ENCODE measurements at regions of chr9 and their contacts with region 1.

Region 1: DNA sequence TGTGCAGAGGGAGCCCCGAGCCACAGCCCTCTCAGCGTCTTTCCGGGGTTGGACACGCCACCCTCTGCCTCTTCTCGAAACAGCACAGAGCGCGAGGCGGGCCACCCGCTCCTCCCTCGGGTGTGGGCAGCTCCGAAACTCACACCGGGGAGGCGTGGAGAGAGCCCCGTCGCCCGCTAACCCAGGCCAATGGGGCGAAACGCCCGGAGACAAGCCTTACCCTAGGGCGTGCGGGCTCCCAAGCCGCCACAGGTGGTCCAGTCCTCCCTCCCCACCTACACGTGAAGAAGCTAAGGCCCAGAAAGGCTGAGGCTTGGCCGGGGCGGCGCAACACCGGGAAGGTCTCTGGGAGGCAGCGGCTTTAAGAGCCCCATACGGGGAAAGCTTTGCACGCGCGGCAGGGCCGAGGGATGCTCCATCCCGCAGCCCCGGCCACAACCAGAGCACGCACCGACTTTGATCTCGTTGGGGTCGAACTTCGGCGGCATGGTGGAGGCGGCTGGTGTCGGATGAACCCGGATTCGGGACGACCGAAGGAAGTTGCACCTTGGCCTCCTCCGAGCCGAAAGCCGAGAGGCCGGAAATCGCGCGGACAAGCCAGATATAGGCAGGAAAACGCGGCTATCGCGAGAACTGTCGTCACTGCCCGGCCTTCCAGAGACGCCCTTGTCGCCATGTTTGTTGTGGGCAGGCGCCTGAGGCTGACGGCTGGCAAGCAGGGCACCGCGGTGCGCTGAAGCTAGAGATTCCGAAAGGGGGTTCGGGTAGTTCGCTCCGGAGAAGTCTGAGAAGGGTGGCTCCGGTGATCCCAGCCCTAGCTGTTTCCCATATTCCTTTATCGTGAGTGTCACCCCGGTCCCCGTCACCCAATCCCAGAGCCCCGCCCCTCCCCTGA is at the starts of genes LRSAM1 and RPL12:
- DNase-seq: peak; percentile 97
- ATAC-seq: peak; percentile 85 to 88
- total RNA-seq, gene LRSAM1: 17.2 to 22.6 TPM
- total RNA-seq, gene RPL12: 691 to 730 TPM

Region 2: DNA sequence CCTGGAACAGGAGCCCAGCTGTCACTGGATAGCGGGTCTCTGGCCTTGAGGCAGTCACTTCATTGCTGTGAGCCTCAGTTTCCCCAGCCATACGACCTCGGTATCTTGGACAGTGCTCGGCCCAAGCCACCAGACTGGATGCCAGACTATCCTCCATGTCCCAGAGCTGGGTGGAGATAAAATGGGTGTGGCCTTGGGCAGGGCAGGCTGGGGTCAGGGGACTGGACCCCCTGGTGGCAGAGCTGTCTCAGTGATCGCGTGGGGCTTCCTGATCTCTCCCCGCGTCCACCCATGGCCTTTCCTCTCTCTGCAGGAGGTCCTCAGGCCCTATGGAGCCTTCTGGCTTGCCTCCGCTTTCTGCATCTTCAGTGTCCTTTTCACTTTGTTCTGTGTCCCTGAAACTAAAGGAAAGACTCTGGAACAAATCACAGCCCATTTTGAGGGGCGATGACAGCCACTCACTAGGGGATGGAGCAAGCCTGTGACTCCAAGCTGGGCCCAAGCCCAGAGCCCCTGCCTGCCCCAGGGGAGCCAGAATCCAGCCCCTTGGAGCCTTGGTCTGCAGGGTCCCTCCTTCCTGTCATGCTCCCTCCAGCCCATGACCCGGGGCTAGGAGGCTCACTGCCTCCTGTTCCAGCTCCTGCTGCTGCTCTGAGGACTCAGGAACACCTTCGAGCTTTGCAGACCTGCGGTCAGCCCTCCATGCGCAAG is 44.1 kb before region 1 on chr9:
- intact Hi-C with region 1: no loop called
- DNase-seq: no peak
- ATAC-seq: peak in 1 of 2 donors; percentile 62

Region 3: DNA sequence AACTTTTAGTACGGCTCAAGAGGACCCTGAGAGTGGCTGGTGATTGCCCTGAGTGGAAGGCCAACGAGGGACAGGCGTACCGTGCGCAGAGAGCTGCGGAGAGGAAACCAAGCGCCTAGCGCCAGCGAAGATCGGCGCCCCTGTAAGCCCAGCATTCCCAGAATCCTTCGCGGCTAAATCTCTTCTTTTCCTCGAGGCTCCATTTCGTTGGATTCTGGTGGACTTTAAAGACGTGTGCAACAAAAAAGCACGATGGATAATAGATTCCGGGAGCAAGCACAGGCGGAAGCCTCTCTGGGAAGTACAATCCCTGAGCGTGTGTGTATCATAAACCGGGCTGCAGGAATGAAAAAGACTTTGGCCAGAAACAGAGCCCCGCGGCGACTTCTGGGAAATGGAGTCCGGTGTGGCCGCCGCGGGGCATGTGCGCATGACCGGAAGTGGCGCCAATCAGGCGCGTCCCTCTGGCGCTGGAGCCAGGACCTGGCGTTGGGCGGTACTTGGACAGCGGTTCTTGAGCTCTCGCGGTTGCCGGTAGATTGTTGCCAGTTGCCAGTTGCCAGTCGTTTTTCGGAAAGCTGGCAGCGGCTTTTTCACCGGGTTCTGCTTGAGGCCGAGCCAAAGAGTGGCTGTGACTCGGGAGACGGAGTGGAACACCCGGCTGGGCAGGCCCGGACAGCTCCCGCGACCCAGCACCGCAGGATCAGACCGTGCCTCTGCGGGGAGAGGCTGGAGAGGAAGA is 27.0 kb before region 1 on chr9 and contains the start of gene ZNF79:
- intact Hi-C with region 1: loop called in 1 of 2 experiments (anchors 1 kb)
- DNase-seq: peak; percentile 95
- ATAC-seq: peak; percentile 97 to 98
- total RNA-seq, gene ZNF79: 6.2 to 6.6 TPM

Measured in left cardiac atrium (tissue), 4 donors.